ENCODE measurements at regions of chr6 and their contacts with region 1.

Region 1: GRCh38 chr6:11496152-11497060 is 41.1 kb upstream of the TMEM170B start:
- DNase-seq: peak; percentile 74
- H3K4me3 Mint-ChIP-seq: no peak overlapping the region
- H3K27ac Mint-ChIP-seq: no peak overlapping the region
- H3K4me1 Mint-ChIP-seq: peaks cover 5% of the 10 kb centered on the region
- H3K27me3 Mint-ChIP-seq: no peaks in the 10 kb centered on the region

Region 2: DNA sequence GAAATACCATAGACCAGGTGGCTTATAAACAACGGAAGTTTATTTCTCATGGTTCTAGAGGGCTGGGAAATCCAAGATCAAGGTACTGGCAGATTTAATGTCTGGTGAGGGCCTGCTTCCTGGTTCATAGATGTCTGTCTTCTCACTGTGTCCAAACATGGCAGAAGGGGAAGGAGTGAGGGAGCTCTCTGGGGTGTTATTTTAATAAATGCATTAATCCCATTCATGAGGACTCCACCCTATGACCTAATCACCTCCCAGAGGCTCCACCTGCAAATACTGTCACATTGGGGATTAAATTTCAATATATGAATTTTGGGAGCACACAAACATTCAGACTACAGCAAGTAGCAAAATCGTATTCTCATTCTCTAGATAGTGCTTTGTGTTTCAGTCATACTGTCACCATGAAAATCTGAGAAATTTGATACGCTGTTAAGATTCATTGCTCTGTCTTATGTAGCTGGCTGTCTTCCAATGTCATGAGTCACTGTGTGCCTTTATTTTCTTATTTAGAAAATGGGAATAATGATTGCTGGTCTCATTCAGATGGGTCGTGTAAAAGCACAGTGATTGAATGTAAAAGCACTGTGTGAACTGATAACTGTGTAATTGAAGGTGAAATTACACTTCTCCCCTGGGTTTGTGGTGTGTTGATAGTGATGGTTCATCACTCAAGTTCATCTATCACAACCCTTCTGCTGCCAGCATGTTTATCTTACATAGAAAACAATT is 376.0 kb before region 1 on chr6:
- CTCF ChIA-PET with region 1: interaction called, 10 read pairs
- POLR2A ChIA-PET with region 1: no interaction called
- intact Hi-C with region 1: no loop called
- DNase-seq: no peak
- H3K4me3 Mint-ChIP-seq: no peak overlapping the region
- H3K27ac Mint-ChIP-seq: no peak overlapping the region
- H3K4me1 Mint-ChIP-seq: peaks cover 22% of the 10 kb centered on the region
- H3K27me3 Mint-ChIP-seq: no peaks in the 10 kb centered on the region

Region 3: GRCh38 chr6:11172501-11173332 is 323.7 kb before region 1 on chr6:
- CTCF ChIA-PET with region 1: interaction called, 61 read pairs
- POLR2A ChIA-PET with region 1: no interaction called
- intact Hi-C with region 1: loop called (anchors 1 kb)
- DNase-seq: peak; percentile 81
- H3K4me3 Mint-ChIP-seq: peak overlapping the region; percentile 16
- H3K27ac Mint-ChIP-seq: no peak overlapping the region
- H3K4me1 Mint-ChIP-seq: peaks cover 16% of the 10 kb centered on the region
- H3K27me3 Mint-ChIP-seq: no peaks in the 10 kb centered on the region

Region 4: DNA sequence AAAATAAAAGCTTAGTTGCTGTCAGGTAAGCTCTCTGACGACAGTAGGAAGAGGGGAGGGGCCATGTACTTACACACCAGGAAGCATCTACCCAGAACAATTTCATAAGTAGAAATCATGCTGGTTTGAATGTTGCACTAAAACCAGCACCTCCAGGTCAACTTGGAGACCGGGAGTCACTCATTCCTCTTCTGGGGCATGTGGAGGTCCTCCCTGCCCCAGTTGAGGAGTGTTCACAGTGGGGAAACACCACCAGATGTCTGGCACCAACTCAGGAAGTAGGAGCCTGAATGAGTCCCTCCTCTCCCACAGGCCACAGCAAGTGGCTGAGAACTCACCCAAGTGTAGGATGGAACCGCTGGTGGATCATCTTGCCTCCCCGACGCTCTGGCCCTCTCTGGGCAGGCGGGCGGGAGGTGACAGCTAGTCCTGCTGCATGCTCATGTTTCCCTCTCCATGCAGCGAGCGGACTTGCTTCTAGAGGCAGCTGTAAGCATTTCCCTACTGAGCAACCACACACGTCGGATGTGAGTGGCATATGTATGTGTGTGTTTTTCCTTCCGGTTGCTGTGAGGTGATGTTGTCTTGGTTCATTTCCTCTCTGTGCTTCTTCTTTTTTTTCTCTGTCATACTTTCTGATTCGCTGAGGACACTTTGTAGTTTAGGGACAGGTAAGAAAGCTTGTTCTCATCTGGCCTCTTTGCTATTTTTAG is 114.4 kb before region 1 on chr6:
- CTCF ChIA-PET with region 1: interaction called, 18 read pairs
- POLR2A ChIA-PET with region 1: no interaction called
- intact Hi-C with region 1: no loop called
- DNase-seq: peak; percentile 82
- H3K4me3 Mint-ChIP-seq: peak overlapping the region; percentile 85
- H3K27ac Mint-ChIP-seq: peak overlapping the region; percentile 95
- H3K4me1 Mint-ChIP-seq: peaks cover 58% of the 10 kb centered on the region
- H3K27me3 Mint-ChIP-seq: no peaks in the 10 kb centered on the region

Region 5: DNA sequence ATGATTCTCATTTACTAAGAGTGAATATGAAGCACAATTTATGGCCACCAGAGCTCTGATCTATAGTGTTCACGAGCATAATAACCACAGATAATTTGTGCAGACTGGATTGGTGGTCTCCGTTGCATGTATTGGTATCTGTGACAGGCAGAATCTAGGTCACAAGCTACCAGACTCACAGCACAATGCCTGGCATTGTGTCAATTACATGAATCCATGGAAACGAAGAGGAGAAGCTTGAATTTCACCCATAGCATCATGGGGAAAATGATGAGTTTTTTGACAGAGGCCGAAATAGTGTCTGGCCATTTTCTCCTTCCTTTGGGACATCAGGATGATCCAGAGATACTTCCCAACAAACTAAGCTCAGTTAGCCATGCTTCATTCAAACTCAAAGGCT is 11.1 kb before region 1 on chr6:
- CTCF ChIA-PET with region 1: interaction called, 11 read pairs
- POLR2A ChIA-PET with region 1: interaction called, 3 read pairs
- intact Hi-C with region 1: no loop called
- DNase-seq: no peak
- H3K4me3 Mint-ChIP-seq: no peak overlapping the region
- H3K27ac Mint-ChIP-seq: no peak overlapping the region
- H3K4me1 Mint-ChIP-seq: no peaks in the 10 kb centered on the region
- H3K27me3 Mint-ChIP-seq: no peaks in the 10 kb centered on the region

Measured in activated CD4-positive, alpha-beta memory T cell treated with anti-CD3 and anti-CD28 coated beads for 36 hours (primary cell).